HepG2 (cell line): ENCODE measurements at regions of chr10 and their contacts with region 1.

Region 1: GRCh38 chr10:61140765-61141392 is 196.9 kb upstream of the RHOBTB1 start:
- DNase-seq: peak; percentile 68
- ATAC-seq: peak; percentile 84
- H3K4me3 ChIP-seq: no peak overlapping the region; a peak in 1 of 6 replicates
- H3K27ac ChIP-seq: no peak overlapping the region
- H3K4me1 ChIP-seq: peaks cover 20% of the 10 kb centered on the region
- H3K27me3 ChIP-seq: no peaks in the 10 kb centered on the region
- CTCF ChIP-seq: peak; percentile 74
- EP300 ChIP-seq: no peak
- POLR2A ChIP-seq: no peak
- RAD21 ChIP-seq: 0 out of 2 replicates have a peak, but pooled peaks have one; percentile 31

Region 2: DNA sequence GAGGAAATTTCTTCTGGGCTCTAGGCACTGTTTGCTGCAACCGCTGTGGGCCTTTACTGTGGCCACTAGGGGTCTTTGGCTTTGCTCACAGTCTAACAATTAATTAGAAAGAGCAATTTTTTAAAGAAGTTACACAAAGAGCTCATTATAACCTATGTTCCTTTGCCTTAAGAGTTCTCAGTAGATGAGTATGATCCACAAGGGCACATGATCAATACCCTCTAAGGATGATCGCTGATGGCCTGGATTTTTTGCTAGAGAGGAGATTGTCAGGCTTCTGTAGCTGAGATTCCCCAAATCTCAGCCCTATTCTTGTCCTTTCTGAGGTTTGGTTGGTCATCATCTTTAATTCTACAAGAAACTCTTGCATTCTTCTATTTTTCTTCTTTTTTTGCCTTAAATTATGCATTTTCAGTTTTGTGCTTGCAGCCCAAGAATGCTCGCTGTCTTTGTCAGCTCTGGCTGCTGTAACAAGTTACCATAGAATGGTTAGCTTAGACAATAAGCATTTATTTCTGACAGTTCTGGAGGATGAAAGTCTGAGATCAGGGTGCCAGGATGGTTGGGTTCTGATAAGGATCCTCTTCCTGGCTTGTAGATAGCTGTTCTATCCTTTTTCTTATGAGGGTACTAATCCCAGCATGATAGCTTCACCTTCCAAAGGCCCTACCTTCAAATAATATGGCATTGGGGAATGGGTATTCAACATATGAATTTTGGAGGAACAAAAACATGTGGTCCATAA is 115.9 kb before region 1 on chr10:
- CTCF ChIA-PET with region 1: no interaction called
- POLR2A ChIA-PET with region 1: no interaction called
- in situ Hi-C with region 1: no loop called
- intact Hi-C with region 1: loop called (anchors 2 kb)
- DNase-seq: peak; percentile 31
- ATAC-seq: peak; percentile 92
- H3K4me3 ChIP-seq: no peak overlapping the region
- H3K27ac ChIP-seq: no peak overlapping the region
- H3K4me1 ChIP-seq: no peaks in the 10 kb centered on the region
- H3K27me3 ChIP-seq: no peaks in the 10 kb centered on the region
- CTCF ChIP-seq: peak; percentile 55
- EP300 ChIP-seq: no peak
- POLR2A ChIP-seq: no peak
- RAD21 ChIP-seq: peak; percentile 36; the same call in 1 of the 2 replicates

Region 3: DNA sequence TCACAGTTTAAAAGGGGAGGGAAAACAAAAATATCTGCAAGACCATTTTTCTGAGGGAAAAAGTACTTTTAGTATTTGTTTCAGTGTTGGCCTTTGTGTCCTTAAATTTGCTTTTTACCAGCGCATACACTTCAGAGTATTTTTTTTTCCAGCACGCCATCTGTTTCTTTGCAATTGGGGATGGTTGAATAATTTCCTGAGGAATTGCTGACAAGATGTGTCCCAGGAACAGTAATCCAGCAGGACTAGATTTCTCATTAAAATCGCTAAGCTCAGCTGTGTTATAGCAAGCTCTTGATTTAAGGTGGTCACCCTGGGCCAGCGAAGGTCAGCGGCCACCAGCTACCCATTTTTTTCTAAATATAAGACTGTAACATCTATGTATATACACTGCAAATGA is 40.0 kb before region 1 on chr10:
- CTCF ChIA-PET with region 1: no interaction called
- POLR2A ChIA-PET with region 1: no interaction called
- in situ Hi-C with region 1: no loop called
- intact Hi-C with region 1: no loop called
- DNase-seq: no peak
- ATAC-seq: no peak
- H3K4me3 ChIP-seq: no peak overlapping the region
- H3K27ac ChIP-seq: no peak overlapping the region
- H3K4me1 ChIP-seq: no peaks in the 10 kb centered on the region
- H3K27me3 ChIP-seq: no peaks in the 10 kb centered on the region
- CTCF ChIP-seq: no peak
- EP300 ChIP-seq: no peak
- POLR2A ChIP-seq: no peak
- RAD21 ChIP-seq: no peak

Region 4: DNA sequence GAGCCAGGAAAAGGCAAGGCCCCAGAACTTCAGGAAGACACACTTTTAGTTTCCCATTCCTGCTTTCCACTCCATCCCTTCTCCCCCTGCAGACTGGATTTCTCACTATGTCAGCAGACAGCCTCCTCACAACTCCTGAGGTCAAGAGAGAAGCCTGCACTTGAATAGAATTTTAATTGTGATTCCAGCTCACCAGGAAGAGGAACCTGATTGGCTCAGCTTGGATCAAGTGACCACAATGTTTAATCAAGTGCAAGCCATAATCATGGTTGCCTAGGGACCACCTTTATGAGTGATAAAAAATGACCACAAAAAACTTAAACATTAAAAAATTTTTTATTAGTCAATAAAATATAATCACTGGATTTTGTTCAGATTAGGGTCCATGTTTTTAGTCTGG is 47.8 kb after region 1 on chr10:
- CTCF ChIA-PET with region 1: interaction called, 3 read pairs
- POLR2A ChIA-PET with region 1: no interaction called
- in situ Hi-C with region 1: no loop called
- intact Hi-C with region 1: loop called (anchors 2 kb)
- DNase-seq: no peak
- ATAC-seq: no peak
- H3K4me3 ChIP-seq: no peak overlapping the region
- H3K27ac ChIP-seq: no peak overlapping the region
- H3K4me1 ChIP-seq: 0 out of 2 replicates have a peak, but pooled peaks cover 5% of the 10 kb centered on the region
- H3K27me3 ChIP-seq: no peaks in the 10 kb centered on the region; a peak in 1 of 5 replicates
- CTCF ChIP-seq: no peak
- EP300 ChIP-seq: no peak
- POLR2A ChIP-seq: no peak
- RAD21 ChIP-seq: no peak